Common myeloid progenitor, CD34-positive (primary cell): ENCODE measurements at regions of chr7 and their contacts with region 1.

Region 1: DNA sequence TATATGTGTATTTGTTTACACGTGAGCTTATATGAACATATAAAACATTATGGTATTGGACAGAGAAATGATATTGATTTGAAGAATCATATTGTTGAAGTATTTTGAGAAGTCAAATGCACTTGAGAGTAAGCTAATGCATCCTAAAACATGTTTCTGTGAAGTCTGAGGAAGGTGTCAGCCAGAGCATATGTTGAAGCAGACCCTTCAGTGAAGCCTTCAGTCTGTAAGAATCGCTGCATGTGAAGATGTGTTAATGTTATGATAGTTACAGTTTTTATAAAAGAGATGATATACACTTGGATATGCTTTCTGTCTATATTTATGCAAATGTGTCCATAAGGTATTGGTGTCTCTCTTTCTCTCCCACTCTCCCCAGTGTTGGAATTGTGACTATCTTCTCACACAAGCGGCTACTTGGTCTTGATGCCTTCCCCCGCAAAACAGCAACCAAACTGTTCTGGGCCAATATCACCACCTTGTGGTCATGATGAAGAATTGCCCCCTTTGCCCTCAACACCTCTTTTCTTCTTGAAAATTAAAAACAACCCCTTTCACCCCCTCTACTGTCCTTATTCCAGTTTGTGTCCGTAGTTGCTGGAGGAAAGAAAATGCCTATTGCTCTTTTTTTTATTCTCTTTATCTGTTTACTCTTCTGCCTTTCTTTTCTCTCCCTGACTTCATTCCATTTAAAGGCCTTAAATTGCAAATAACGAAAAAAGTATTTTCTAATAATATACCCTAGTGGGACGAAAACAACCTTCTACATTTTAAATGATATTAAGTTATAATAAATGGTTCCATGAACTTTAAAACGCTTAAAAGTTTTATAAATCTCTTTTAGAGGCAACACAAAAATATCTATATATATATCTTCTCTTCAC is 64.9 kb downstream of the IKZF1 start:
- DNase-seq: peak; percentile 87 to 93 (median 90)
- H3K4me3 ChIP-seq: no peak overlapping the region
- H3K27ac ChIP-seq: no peak overlapping the region
- H3K4me1 ChIP-seq: peaks cover 10 to 26% (median 14%) of the 10 kb centered on the region in 4 experiments
- H3K27me3 ChIP-seq: no peaks in the 10 kb centered on the region

Region 2: DNA sequence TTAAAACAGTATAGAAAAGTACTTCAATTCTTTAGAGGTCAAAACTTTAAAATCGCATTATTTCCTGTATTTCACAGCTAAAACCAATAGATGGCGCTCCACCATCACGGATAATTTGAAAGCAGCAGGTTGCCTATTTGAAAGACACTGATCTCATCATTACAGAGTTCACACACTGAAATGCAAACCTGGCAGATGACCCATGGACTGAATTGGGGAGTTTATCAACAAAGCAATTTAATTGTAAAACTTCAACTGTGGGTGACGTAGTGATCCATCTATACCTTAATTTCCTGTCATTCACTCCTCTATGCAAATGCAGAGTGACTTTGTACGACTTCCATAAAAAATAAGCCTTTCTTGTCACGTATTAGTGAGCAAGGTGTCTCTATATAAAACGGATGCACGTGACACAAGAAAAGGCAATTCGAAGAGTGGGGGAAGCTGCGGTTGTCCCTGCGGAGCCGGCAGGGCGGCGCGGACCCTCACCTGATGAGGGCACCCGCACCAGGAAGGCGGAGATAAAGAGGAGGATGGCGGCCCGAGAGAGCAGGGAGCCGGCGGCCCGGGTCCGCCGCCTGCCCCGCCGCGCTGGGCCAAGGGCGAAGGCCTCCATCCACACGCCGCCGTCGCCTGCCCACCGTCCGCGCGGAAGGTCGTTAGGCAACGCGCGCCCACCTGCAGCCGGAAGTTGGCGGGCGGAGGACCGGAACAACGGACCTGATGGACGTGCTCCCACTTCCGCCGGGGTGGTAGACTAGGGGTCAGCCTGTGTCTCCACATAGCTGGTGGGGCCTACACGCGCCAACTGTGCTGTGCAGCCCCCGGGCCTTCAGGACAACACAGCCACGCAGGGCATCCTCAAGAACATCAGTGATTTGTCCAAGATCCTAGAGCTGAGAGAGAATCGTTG is 276.6 kb before region 1 on chr7 and contains the start of gene ZPBP:
- CTCF ChIA-PET with region 1: interaction called, 19 read pairs
- POLR2A ChIA-PET with region 1: no interaction called
- DNase-seq: peak; percentile 68 to 84 (median 78)
- H3K4me3 ChIP-seq: peak within 1 kb of the TSS; percentile 11 to 86 (median 76)
- H3K27ac ChIP-seq: peak within 1 kb of the TSS in 1 of 2 experiments; percentile 22
- H3K4me1 ChIP-seq: peaks cover 3 to 9% (median 6%) of the 10 kb centered on the region in 4 experiments
- H3K27me3 ChIP-seq: no peaks in the 10 kb centered on the region

Region 3: GRCh38 chr7:50147951-50148808 is 221.2 kb before region 1 on chr7:
- CTCF ChIA-PET with region 1: interaction called, 46 read pairs
- POLR2A ChIA-PET with region 1: interaction called, 4 read pairs
- DNase-seq: peak in 2 of 3 donors; percentile 67 to 70
- H3K4me3 ChIP-seq: peak overlapping the region in 1 of 7 experiments; percentile 11
- H3K27ac ChIP-seq: peak overlapping the region in 1 of 2 experiments; percentile 39
- H3K4me1 ChIP-seq: peaks cover 28 to 66% (median 30%) of the 10 kb centered on the region in 4 experiments
- H3K27me3 ChIP-seq: no peaks in the 10 kb centered on the region

Region 4: DNA sequence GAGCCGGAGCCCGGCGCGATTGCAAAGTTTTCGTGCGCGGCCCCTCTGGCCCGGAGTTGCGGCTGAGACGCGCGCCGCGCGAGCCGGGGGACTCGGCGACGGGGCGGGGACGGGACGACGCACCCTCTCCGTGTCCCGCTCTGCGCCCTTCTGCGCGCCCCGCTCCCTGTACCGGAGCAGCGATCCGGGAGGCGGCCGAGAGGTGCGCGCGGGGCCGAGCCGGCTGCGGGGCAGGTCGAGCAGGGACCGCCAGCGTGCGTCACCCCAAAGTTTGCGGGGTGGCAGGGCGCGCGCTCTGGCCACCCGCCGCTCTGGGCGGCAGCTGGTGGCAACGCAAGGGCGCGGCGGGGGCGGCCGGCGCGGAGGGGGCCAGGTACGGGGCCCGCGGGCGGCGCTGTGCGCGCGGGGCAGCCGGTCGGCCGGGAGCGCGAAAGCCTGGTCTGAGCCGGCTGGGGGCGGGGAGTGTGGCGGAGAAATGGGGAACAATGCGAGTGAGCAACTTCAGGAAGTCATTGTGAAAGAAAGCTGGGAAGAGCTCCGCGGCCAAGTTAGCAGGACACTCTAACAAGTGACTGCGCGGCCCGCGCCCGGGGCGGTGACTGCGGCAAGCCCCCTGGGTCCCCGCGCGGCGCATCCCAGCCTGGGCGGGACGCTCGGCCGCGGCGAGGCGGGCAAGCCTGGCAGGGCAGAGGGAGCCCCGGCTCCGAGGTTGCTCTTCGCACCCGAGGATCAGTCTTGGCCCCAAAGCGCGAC is 65.1 kb before region 1 on chr7 and contains the start of gene IKZF1:
- CTCF ChIA-PET with region 1: interaction called, 117 read pairs
- POLR2A ChIA-PET with region 1: no interaction called
- DNase-seq: peak; percentile 82 to 84 (median 83)
- H3K4me3 ChIP-seq: peak within 1 kb of the TSS; percentile 80 to 100 (median 94)
- H3K27ac ChIP-seq: peak within 1 kb of the TSS; percentile 67 to 87
- H3K4me1 ChIP-seq: peaks cover 22 to 41% (median 33%) of the 10 kb centered on the region in 4 experiments
- H3K27me3 ChIP-seq: no peaks in the 10 kb centered on the region

Region 5: DNA sequence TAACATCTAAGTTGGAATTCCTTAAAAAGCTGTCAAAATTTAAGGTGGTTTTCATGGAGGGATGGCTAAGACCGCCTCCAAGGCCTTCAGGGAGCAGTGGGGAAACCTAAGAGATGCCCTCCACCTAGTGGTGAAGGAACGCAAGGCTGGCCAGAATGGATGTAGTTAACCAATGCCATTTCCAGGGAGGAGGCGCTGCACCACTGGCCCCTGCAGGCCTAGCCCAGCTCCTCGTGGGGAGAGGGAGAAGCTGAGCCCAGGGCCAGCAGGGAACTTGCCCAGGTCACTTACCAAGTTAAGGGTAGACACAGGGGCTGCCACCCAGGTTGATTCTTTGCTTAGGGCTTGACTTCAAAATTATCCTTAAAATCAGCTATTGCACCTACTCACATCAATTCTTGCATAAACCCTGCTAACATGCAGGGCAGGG is 48.7 kb after region 1 on chr7:
- CTCF ChIA-PET with region 1: interaction called, 22 read pairs
- POLR2A ChIA-PET with region 1: no interaction called
- DNase-seq: peak; percentile 79 to 84 (median 83)
- H3K4me3 ChIP-seq: no peak overlapping the region
- H3K27ac ChIP-seq: no peak overlapping the region
- H3K4me1 ChIP-seq: peaks cover 7 to 29% (median 15%) of the 10 kb centered on the region in 4 experiments
- H3K27me3 ChIP-seq: no peaks in the 10 kb centered on the region

Region 6: DNA sequence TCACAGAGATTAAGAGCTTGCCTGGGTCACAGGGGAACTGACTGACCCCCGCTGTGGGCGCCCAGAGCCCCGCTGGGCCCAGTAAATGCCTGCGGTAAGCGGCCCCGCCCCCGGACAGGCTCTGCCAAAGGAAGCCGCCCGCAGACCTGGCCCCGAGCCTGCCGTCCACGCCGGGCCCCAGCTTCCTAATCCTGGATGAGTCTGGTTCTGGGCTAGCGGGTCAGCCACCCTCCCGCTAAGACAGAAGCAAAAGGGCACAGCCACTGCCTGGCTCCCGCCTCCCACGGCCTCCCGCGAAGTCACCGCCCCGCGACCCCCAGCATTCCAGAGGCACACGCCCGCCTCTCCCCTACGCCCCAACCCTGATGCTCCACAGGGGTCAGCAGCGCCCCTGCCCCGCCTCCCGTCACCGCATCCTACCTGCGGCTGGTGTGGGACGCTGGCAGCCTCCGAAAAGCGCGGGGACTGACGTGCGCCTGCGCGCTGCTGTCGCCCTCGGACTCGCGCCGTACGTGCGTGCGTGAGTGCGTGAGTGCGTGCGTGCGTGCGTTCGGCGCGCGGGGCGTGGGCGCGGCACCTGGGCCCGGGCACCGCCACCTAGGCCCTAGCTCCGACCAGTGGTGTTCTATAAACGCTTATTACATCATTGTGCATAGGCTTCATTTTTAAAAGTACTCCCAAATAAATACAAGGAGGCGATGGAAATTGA is 80.7 kb after region 1 on chr7 and contains the start of gene FIGNL1:
- CTCF ChIA-PET with region 1: no interaction called
- POLR2A ChIA-PET with region 1: no interaction called
- DNase-seq: peak; percentile 65 to 84 (median 78)
- H3K4me3 ChIP-seq: peak within 1 kb of the TSS; percentile 63 to 89 (median 84)
- H3K27ac ChIP-seq: peak within 1 kb of the TSS; percentile 38 to 80
- H3K4me1 ChIP-seq: peaks cover 4 to 24% (median 18%) of the 10 kb centered on the region in 4 experiments
- H3K27me3 ChIP-seq: no peaks in the 10 kb centered on the region